ENCODE measurements at regions of chr15 and their contacts with region 1.

Region 1: GRCh38 chr15:90221246-90221900 is 12.4 kb downstream of the CIB1 start:
- DNase-seq: no peak
- ATAC-seq: peak; percentile 64
- H3K4me3 ChIP-seq: no peak overlapping the region
- H3K27ac ChIP-seq: peak overlapping the region; percentile 99
- H3K4me1 ChIP-seq: peaks cover 96% of the 10 kb centered on the region
- H3K27me3 ChIP-seq: no peaks in the 10 kb centered on the region
- CTCF ChIP-seq: no peak; the same call in 1 of the 2 replicates

Region 2: GRCh38 chr15:90154861-90155626 is 66.3 kb before region 1 on chr15:
- CTCF ChIA-PET with region 1: interaction called, 12 read pairs
- POLR2A ChIA-PET with region 1: interaction called, 14 read pairs
- in situ Hi-C with region 1: loop called (anchors 10 kb)
- intact Hi-C with region 1: no loop called
- DNase-seq: peak; percentile 62
- ATAC-seq: peak; percentile 46
- H3K4me3 ChIP-seq: no peak overlapping the region
- H3K27ac ChIP-seq: peak overlapping the region; percentile 79
- H3K4me1 ChIP-seq: peaks cover 45% of the 10 kb centered on the region
- H3K27me3 ChIP-seq: no peaks in the 10 kb centered on the region
- CTCF ChIP-seq: no peak

Region 3: GRCh38 chr15:90165659-90166421 is 55.5 kb before region 1 on chr15:
- CTCF ChIA-PET with region 1: no interaction called
- POLR2A ChIA-PET with region 1: interaction called, 4 read pairs
- in situ Hi-C with region 1: loop called (anchors 10 kb)
- intact Hi-C with region 1: no loop called
- DNase-seq: peak; percentile 99
- ATAC-seq: peak; percentile 97
- H3K4me3 ChIP-seq: no peak overlapping the region
- H3K27ac ChIP-seq: peak overlapping the region; percentile 100
- H3K4me1 ChIP-seq: peaks cover 61% of the 10 kb centered on the region
- H3K27me3 ChIP-seq: no peaks in the 10 kb centered on the region
- CTCF ChIP-seq: no peak

Region 4: DNA sequence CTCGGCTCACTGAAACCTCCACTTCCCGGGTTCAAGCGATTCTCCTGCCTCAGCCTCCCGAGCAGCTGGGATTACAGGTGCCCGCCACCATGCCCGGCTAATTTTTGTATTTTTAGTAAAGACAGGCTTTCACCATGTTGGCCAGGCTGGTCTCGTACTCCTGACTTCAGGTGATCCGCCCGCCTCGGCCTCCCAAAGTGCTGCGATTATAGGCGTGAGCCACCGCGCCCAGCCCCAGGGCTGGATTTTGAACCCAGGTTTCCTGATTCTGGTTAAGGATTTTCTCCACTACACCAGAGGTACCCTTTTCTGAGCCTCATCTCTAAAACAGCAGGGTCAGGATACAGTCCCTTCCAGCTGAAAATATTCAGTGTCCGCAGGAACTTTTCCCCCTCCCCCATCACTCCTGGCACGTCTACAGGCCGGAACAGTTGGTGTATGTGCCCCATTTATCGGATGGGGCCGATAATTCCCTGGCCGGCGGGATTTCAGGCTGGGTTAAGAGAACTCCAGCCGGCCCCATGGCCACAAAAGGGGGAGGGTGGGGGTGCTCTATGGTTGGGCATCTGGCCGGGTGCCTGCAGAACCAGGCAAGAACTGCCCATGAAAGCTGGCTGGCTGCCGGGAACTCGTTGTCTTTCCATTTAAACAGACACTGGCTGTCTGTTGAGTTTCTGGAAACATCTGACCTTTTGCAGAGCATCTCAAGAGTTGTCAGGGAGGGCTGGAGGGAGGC is 47.1 kb before region 1 on chr15:
- CTCF ChIA-PET with region 1: interaction called, 3 read pairs
- POLR2A ChIA-PET with region 1: interaction called, 12 read pairs
- in situ Hi-C with region 1: loop called (anchors 10 kb)
- intact Hi-C with region 1: no loop called
- DNase-seq: no peak
- ATAC-seq: peak; percentile 86
- H3K4me3 ChIP-seq: no peak overlapping the region; a peak in 1 of 4 replicates
- H3K27ac ChIP-seq: peak overlapping the region; percentile 95
- H3K4me1 ChIP-seq: peaks cover 33% of the 10 kb centered on the region
- H3K27me3 ChIP-seq: no peaks in the 10 kb centered on the region
- CTCF ChIP-seq: no peak

Region 5: GRCh38 chr15:90320061-90320884 is 98.9 kb after region 1 on chr15:
- CTCF ChIA-PET with region 1: no interaction called
- POLR2A ChIA-PET with region 1: no interaction called
- in situ Hi-C with region 1: no loop called
- intact Hi-C with region 1: no loop called
- DNase-seq: peak; percentile 86
- ATAC-seq: peak; percentile 99
- H3K4me3 ChIP-seq: peak overlapping the region; percentile 10 to 36; a peak in 3 of 4 replicates
- H3K27ac ChIP-seq: peak overlapping the region; percentile 79
- H3K4me1 ChIP-seq: peaks cover 14% of the 10 kb centered on the region
- H3K27me3 ChIP-seq: no peaks in the 10 kb centered on the region
- CTCF ChIP-seq: peak; percentile 97

Region 6: GRCh38 chr15:90352109-90352893 is 130.9 kb after region 1 on chr15 and contains the start of gene ZNF774:
- CTCF ChIA-PET with region 1: no interaction called
- POLR2A ChIA-PET with region 1: no interaction called
- in situ Hi-C with region 1: no loop called
- intact Hi-C with region 1: no loop called
- DNase-seq: peak; percentile 94
- ATAC-seq: peak; percentile 99
- H3K4me3 ChIP-seq: peak within 1 kb of the TSS; percentile 79 to 85
- H3K27ac ChIP-seq: peak within 1 kb of the TSS; percentile 55
- H3K4me1 ChIP-seq: peaks cover 10% of the 10 kb centered on the region
- H3K27me3 ChIP-seq: no peaks in the 10 kb centered on the region
- CTCF ChIP-seq: no peak
- total RNA-seq, gene ZNF774: 5.2 TPM

Region 7: GRCh38 chr15:90419738-90420406 is 198.5 kb after region 1 on chr15:
- CTCF ChIA-PET with region 1: no interaction called
- POLR2A ChIA-PET with region 1: no interaction called
- in situ Hi-C with region 1: no loop called
- intact Hi-C with region 1: no loop called
- DNase-seq: no peak
- ATAC-seq: peak; percentile 86
- H3K4me3 ChIP-seq: peak overlapping the region in 1 of 2 experiments; percentile 26; a peak in 2 of 4 replicates
- H3K27ac ChIP-seq: peak overlapping the region; percentile 83
- H3K4me1 ChIP-seq: peaks cover 50% of the 10 kb centered on the region
- H3K27me3 ChIP-seq: no peaks in the 10 kb centered on the region
- CTCF ChIP-seq: no peak

Region 8: GRCh38 chr15:90435652-90436337 is 214.4 kb after region 1 on chr15:
- CTCF ChIA-PET with region 1: no interaction called
- POLR2A ChIA-PET with region 1: no interaction called
- in situ Hi-C with region 1: no loop called
- intact Hi-C with region 1: no loop called
- DNase-seq: no peak
- ATAC-seq: no peak
- H3K4me3 ChIP-seq: no peak overlapping the region
- H3K27ac ChIP-seq: no peak overlapping the region
- H3K4me1 ChIP-seq: no peaks in the 10 kb centered on the region
- H3K27me3 ChIP-seq: no peaks in the 10 kb centered on the region
- CTCF ChIP-seq: no peak